AG04450 (cell line): ENCODE measurements at regions of chr19 and their contacts with region 1.

Region 1: DNA sequence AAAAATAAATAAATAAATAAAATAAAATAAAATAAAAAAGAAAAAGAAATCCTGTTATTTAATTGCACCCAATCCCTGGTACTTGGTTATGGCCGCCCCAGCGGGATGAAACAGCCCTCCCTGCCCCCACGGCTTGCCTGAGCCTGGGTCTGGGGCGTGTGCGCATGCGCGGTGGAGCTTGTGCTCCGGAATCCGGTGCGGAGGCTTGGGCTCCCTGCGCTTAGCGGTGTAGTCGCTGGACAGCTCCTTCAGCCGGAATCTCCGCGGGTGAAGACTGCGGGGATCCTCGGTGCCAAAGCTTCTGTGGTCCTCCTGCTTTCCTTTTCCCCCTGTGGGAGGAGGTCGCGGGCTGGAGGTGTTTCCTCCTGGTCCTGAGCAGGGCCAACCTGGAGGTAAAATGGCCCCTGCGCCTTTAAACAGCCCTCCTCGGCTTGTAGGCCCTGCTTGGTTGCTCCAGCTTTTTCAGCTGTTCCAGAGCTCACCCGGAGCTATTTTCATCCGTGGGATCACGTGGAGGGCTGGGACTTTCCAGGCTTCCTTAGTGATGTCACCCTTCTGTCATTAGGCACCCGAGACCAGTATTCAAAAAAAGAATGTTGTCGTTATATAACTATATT is at the start of gene PLA2G4C:
- DNase-seq: peak; percentile 82
- H3K4me3 ChIP-seq: peak within 1 kb of the TSS; percentile 73
- H3K27ac ChIP-seq: peak within 1 kb of the TSS; percentile 100
- H3K27me3 ChIP-seq: no peaks in the 10 kb centered on the region
- CTCF ChIP-seq: no peak
- polyA plus RNA-seq, gene PLA2G4C: 8.0 and 10.4 TPM in 2 replicates

Region 2: GRCh38 chr19:48123907-48124651 is 13.6 kb after region 1 on chr19:
- CTCF ChIA-PET with region 1: interaction called, 6 read pairs
- POLR2A ChIA-PET with region 1: interaction called, 11 read pairs
- DNase-seq: peak; percentile 15
- H3K4me3 ChIP-seq: no peak overlapping the region
- H3K27ac ChIP-seq: no peak overlapping the region
- H3K27me3 ChIP-seq: no peaks in the 10 kb centered on the region
- CTCF ChIP-seq: peak; percentile 48

Region 3: DNA sequence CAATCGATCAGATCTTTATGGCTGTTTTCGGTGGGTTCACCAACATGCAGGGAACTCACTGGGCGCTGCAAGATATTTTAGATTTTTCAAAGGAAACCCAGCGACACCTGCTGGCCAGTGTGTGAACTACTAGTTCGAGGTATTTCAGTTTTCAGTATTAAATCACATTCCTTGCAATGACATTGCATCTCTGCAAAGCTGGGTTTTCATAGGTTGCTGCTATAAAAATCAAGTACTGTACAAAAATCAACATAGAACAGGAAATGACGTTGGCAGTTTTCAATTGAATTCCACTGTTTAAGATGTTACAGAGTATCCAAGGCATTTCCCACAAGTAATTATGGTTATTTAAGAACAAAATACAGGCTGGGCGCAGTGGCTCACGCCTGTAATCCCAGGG is 42.1 kb after region 1 on chr19:
- CTCF ChIA-PET with region 1: interaction called, 19 read pairs
- POLR2A ChIA-PET with region 1: no interaction called
- DNase-seq: peak; percentile 33
- H3K4me3 ChIP-seq: no peak overlapping the region
- H3K27ac ChIP-seq: no peak overlapping the region
- H3K27me3 ChIP-seq: no peaks in the 10 kb centered on the region
- CTCF ChIP-seq: peak; percentile 80